ENCODE measurements at regions of chr11 and their contacts with region 1.

Region 1: GRCh38 chr11:102332611-102332994 is 14.4 kb upstream of the BIRC2 start:
- DNase-seq: no peak
- H3K4me3 Mint-ChIP-seq: no peak overlapping the region
- H3K27ac Mint-ChIP-seq: peak overlapping the region; percentile 68
- H3K4me1 Mint-ChIP-seq: peaks cover 12% of the 10 kb centered on the region
- H3K27me3 Mint-ChIP-seq: no peaks in the 10 kb centered on the region

Region 2: GRCh38 chr11:102244681-102245409 is 87.8 kb before region 1 on chr11:
- CTCF ChIA-PET with region 1: no interaction called
- intact Hi-C with region 1: no loop called
- DNase-seq: no peak
- H3K4me3 Mint-ChIP-seq: no peak overlapping the region
- H3K27ac Mint-ChIP-seq: no peak overlapping the region
- H3K4me1 Mint-ChIP-seq: peaks cover 2% of the 10 kb centered on the region
- H3K27me3 Mint-ChIP-seq: no peaks in the 10 kb centered on the region

Region 3: GRCh38 chr11:102322560-102322959 is 10.0 kb before region 1 on chr11:
- CTCF ChIA-PET with region 1: no interaction called
- intact Hi-C with region 1: loop called (anchors 1 kb)
- DNase-seq: no peak
- H3K4me3 Mint-ChIP-seq: peak overlapping the region; percentile 49
- H3K27ac Mint-ChIP-seq: peak overlapping the region; percentile 86
- H3K4me1 Mint-ChIP-seq: peaks cover 59% of the 10 kb centered on the region
- H3K27me3 Mint-ChIP-seq: no peaks in the 10 kb centered on the region